ENCODE measurements at regions of chr20 and their contacts with region 1.

Region 1: DNA sequence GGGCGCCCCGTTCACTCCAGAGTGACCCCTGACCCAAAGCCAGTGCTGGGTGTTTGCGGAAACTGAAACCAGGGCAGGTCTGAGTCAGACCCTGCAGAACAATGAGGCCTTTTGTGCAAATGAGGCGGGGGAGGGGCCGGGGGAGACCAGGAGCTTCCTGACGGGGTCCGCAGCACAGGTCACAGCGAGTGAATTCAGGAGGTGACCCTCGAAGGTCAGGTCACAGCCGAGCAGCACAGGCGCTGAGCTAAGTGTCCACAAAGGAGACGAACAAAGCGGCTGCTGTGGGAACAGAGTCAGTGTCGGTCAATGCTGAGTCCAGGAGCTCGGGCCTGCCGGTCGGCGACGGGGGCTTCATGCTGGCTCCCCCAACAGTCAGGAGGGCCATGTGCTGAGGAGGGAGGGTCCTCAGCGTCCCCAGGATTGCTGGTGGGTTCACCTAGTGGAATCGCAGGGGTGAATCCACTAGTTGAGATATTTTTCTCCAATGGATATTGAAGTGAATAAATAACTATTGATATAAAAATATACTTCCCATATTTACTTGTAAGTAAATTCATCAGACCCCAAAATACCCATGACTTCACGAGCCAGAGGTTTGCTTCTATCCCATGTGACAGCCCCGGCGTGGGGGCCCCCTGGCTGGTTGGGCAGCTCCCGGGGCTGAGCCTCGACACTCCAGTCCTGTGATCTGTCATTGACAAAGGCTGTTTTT is 188.4 kb upstream of the SULF2 start:
- DNase-seq: peak; percentile 86 to 95
- H3K4me3 ChIP-seq: peak overlapping the region; percentile 68
- H3K27ac ChIP-seq: peak overlapping the region; percentile 100
- H3K4me1 ChIP-seq: peaks cover 60% of the 10 kb centered on the region
- H3K27me3 ChIP-seq: no peaks in the 10 kb centered on the region
- CTCF ChIP-seq: no peak

Region 2: DNA sequence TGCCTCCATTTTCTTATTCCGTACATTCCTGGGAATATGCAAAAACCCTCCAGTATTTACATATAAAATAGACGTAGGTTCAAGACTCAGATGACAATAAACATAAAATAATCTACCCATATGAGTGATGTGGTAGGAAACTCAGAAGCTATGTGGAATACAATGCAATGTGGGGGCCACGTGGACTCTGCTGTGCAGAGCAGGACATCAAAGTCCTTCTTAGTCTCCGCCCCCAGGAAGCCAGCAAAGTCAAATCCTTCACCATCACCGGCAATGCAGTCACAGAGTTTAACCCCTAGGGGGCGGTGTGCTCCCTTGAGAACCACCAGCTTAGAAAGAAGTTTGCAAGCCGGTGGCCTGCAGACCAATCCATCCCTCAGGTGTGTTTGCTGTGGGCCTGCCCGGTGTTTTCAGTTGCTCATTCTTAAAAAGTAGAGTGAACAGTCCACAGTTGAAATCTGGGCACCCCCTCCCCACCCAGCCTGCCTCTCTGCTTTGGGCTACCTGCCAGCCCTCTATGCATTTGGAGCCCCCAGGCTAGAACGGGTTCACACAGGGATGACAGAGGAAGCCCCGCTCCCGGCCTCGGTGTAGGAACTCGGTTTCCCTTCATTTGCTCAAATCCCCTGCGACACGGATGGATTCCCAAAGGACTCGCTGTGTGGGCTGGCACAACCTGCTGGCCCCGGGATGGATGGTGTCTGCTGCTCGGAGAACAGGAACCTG is 248.3 kb before region 1 on chr20:
- CTCF ChIA-PET with region 1: no interaction called
- POLR2A ChIA-PET with region 1: no interaction called
- intact Hi-C with region 1: loop called (anchors 2 kb)
- DNase-seq: peak; percentile 84 to 86
- H3K4me3 ChIP-seq: no peak overlapping the region
- H3K27ac ChIP-seq: no peak overlapping the region
- H3K4me1 ChIP-seq: 0 out of 2 replicates have a peak, but pooled peaks cover 4% of the 10 kb centered on the region
- H3K27me3 ChIP-seq: no peaks in the 10 kb centered on the region
- CTCF ChIP-seq: peak; percentile 99

Region 3: DNA sequence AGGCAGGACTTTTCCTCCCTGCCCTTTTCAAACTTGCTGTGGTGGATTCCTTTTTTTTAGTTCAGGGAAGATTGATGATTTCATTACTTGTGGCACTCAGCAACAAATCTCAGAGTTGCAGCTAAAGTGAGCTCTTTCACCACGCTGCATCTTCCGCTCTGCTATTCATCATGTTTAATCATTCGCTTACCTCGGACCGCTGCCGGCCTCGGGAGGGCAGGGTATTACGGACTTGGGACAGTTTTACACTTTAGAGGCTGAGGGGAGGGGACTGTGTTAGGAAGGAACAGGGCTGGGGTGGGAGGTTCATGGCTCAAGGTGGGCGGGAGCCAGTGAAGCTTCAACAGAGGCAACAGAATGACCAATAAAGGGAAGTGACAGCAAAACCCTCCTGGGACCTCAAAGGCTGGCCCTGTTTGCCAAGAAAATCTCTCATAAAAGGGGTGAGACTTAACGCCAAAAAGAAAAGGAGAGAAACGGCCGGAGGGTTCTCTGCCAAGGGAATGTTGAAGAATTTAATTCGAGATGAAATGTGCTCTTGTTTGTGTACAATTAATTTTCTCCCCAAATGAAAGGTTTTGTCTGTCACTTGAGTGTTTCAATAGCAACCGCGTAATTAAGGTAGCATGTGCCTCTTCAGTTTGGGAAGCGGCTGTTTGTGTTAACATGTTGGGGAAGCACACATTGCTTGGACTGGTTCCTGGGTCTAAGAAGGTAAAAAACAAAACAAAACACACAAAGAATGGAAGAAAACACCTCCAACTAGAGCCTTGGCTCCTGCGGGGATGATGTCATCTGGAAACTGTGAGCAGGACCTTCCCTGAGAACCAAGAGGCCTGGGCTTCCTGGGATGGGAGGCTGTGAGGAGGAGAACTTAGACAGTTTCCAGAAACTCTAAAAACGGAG is 115.9 kb before region 1 on chr20:
- CTCF ChIA-PET with region 1: interaction called, 4 read pairs
- POLR2A ChIA-PET with region 1: interaction called, 4 read pairs
- intact Hi-C with region 1: loop called (anchors 1 kb)
- DNase-seq: peak; percentile 70 to 76
- H3K4me3 ChIP-seq: peak overlapping the region; percentile 46
- H3K27ac ChIP-seq: peak overlapping the region; percentile 99
- H3K4me1 ChIP-seq: peaks cover 56% of the 10 kb centered on the region
- H3K27me3 ChIP-seq: no peaks in the 10 kb centered on the region
- CTCF ChIP-seq: 0 out of 2 replicates have a peak, but pooled peaks have one; percentile 14

Region 4: GRCh38 chr20:47985092-47985850 is 11.6 kb after region 1 on chr20:
- CTCF ChIA-PET with region 1: interaction called, 14 read pairs
- POLR2A ChIA-PET with region 1: interaction called, 24 read pairs
- intact Hi-C with region 1: loop called (anchors 1 kb)
- DNase-seq: peak; percentile 81 to 89
- H3K4me3 ChIP-seq: peak overlapping the region; percentile 16; the same call in 1 of the 2 replicates
- H3K27ac ChIP-seq: peak overlapping the region; percentile 98
- H3K4me1 ChIP-seq: peaks cover 80% of the 10 kb centered on the region
- H3K27me3 ChIP-seq: no peaks in the 10 kb centered on the region
- CTCF ChIP-seq: no peak

Region 5: GRCh38 chr20:48057251-48057650 is 83.6 kb after region 1 on chr20:
- CTCF ChIA-PET with region 1: no interaction called
- POLR2A ChIA-PET with region 1: interaction called, 10 read pairs
- intact Hi-C with region 1: no loop called
- DNase-seq: no peak
- H3K4me3 ChIP-seq: no peak overlapping the region
- H3K27ac ChIP-seq: no peak overlapping the region
- H3K4me1 ChIP-seq: peaks cover 9% of the 10 kb centered on the region
- H3K27me3 ChIP-seq: no peaks in the 10 kb centered on the region
- CTCF ChIP-seq: no peak

Region 6: DNA sequence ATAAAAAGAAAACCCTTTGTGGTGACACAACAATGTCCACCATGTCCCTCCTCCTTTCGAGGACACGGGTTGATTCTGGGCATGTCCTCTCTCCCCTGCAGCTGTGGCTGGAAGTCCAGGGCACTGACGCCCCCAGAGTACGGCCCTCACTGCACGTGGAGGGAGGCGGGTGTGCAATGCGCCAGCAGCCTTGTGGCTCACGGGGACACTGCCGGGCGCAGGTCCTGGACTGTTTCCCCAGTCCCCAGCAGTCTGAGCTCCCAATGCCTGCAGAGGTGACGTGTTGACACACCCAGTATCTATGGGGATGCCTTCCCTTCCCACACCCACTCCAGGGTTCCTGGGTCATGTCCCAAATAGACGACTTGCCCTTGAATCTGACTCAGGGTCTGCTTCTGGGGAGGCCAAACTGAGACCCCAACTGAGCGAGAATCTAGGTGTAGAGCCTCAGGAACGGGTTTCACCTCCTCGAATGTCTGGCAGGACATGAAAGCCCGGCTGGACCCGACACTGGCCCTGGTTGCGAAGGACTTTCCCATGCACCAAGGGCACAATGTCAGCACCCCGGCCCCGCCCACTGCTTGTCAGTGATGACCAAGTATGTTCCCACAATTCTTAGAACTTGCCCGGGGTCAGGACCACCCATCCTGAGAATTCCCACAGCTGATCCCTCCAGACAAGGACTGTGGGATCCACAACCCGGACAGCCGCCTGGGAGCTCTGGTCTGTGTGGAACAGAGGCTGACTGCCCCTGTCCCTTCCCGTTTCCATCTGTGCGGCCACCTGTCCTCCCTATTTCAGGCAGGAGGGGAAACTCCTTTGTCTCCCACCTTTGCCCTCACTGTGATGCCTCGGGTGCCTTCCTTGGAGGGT is 236.7 kb after region 1 on chr20:
- CTCF ChIA-PET with region 1: no interaction called
- POLR2A ChIA-PET with region 1: no interaction called
- intact Hi-C with region 1: loop called (anchors 5 kb)
- DNase-seq: no peak
- H3K4me3 ChIP-seq: no peak overlapping the region
- H3K27ac ChIP-seq: no peak overlapping the region
- H3K4me1 ChIP-seq: peaks cover 51% of the 10 kb centered on the region
- H3K27me3 ChIP-seq: no peaks in the 10 kb centered on the region
- CTCF ChIP-seq: no peak

Region 7: DNA sequence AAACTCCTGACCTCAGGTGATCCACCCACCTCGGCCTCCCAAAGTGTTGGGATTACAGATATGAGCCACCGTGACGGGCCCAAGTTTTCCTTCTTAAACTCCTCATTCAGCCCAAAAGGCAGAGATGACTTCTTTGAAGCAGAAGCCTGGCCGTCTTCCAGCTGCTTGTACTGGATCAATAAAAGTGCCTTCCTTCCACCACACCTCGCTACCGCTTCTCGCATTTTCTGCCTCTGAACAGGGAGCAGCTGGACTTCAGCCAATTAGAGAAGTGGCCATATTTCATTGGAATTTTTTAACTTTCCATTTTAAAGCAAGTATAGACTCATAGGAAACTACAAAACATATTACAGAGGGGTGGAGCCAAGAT is 613.1 kb after region 1 on chr20:
- CTCF ChIA-PET with region 1: interaction called, 20 read pairs
- POLR2A ChIA-PET with region 1: no interaction called
- intact Hi-C with region 1: no loop called
- DNase-seq: no peak
- H3K4me3 ChIP-seq: no peak overlapping the region
- H3K27ac ChIP-seq: no peak overlapping the region
- H3K4me1 ChIP-seq: peaks cover 5% of the 10 kb centered on the region; the same call in 1 of the 2 replicates
- H3K27me3 ChIP-seq: no peaks in the 10 kb centered on the region
- CTCF ChIP-seq: no peak